Gastrocnemius medialis (tissue), 4 donors: ENCODE measurements at regions of chr7 and their contacts with region 1.

Region 1: DNA sequence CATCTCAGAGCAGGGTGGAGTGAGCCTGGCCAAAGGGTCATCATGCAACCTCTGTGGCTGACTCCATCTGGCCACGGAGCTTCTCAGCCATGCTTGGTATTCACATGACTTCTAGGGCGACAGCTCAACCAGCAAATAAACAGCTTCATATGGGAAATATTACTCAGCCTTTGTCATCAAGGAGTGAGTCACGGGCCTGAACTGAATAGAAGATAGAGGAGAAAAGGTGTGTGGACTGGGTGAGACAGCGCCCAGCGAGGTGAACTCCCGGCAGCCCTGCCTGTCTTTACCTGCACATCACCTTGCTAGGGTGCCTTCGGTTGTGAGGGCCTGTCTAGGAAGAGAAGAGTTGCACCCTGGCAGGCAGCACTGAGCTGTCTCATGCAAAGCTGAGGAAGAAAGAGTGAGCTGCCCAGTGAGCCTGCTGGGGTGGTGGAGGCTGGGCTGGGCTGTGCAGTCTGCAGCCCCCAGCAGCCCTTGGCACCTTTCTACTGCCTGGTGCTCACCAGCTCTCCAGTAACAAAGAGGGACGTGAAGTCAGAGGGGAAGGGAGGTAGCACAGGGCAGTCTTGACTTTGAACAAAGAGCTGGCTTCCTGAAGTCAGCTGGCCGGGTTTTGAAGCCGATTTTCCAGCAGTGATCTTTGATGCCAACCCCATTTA is 114.2 kb downstream of the EGFR start:
- DNase-seq: peak; percentile 57 to 70
- ATAC-seq: peak; percentile 49 to 68
- H3K4me3 ChIP-seq: no peak overlapping the region
- H3K27ac ChIP-seq: peak overlapping the region; percentile 80 to 83 (median 82)
- H3K4me1 ChIP-seq: peaks cover 46 to 65% of the 10 kb centered on the region in 2 donors
- H3K27me3 ChIP-seq: no peaks in the 10 kb centered on the region
- CTCF ChIP-seq: no peak
- POLR2A ChIP-seq: no peak

Region 2: DNA sequence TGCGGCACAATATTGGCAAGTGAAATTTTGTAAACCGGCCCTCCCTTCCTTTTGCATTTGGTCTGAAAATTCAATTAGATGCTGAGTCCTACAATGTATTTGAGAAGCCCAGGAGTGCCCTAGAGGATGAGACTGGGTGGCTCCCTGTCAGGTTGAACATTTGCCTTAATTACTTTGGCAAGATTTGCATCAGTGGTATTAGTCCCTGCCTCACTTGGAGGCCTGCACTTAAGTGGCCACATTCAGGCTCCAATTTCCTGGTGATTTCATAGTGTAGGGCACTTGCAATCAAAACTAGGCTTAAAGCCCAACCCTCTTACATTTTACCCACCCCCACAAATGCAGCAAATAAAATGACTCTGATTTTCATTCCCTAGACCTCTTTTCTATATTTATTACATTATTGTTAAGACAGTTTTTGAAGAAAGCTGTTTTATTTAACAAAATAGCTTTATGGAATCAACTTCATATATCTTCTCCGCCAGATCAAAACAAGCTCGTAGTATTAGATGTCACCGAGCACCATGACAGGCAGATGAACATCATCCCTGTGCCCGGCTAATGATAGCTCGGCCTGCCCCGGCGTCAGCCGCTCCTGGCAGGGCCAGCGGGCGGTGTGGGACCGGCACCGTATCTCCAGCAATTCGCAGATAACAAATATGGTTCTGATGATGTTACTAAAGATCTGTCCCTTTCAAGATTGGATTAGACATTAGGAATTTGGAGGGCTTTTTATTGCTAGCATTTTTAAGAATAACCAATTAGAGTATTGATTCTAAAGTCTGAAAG is 40.6 kb before region 1 on chr7:
- in situ Hi-C with region 1: no loop called
- intact Hi-C with region 1: loop called (anchors 5 kb)
- DNase-seq: peak in 1 of 2 donors; percentile 65
- ATAC-seq: peak; percentile 78 to 85
- H3K4me3 ChIP-seq: no peak overlapping the region
- H3K27ac ChIP-seq: peak overlapping the region; percentile 68 to 73 (median 70)
- H3K4me1 ChIP-seq: peaks cover 27 to 54% of the 10 kb centered on the region in 2 donors
- H3K27me3 ChIP-seq: no peaks in the 10 kb centered on the region
- CTCF ChIP-seq: no peak
- POLR2A ChIP-seq: peak in 1 of 2 donors; percentile 48

Region 3: DNA sequence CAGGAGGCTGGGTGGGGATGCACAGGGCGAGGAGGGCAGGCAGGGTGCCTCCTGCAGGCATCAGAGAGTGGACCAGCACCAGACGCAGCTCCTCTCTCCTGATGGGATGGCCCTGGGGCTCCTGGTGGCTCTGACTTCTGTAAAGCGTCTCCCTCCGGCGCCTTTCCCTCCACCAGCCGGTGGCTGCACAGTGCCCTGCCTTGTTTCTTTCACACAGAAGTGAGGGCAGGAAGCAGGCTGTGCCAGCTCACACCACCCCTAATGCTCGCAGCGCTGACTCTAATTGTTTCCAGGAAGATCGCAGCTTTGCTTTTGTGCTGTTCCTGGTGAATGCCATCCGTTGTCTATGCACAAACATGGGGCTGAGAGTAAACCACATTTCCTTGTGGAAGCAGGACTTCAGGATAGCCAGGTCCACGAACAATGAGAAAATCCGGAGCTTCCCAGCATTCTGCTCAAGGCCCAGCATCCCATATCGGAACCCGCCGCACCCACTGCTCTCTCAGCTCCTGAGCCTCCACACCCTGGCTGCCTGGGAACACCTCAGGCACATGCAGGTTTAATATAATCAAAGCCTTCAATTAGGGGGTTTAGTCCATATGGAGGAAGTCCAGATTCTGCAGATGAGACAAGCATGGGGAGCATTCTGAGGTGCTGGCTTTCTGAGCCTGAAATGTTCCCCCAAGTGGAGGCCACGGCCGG is 80.0 kb after region 1 on chr7:
- in situ Hi-C with region 1: no loop called
- intact Hi-C with region 1: no loop called
- DNase-seq: no peak
- ATAC-seq: no peak
- H3K4me3 ChIP-seq: no peak overlapping the region
- H3K27ac ChIP-seq: no peak overlapping the region
- H3K4me1 ChIP-seq: no peaks in the 10 kb centered on the region
- H3K27me3 ChIP-seq: no peaks in the 10 kb centered on the region
- CTCF ChIP-seq: no peak
- POLR2A ChIP-seq: no peak